GM12878 (cell line): ENCODE measurements at regions of chr15 and their contacts with region 1.

Region 1: DNA sequence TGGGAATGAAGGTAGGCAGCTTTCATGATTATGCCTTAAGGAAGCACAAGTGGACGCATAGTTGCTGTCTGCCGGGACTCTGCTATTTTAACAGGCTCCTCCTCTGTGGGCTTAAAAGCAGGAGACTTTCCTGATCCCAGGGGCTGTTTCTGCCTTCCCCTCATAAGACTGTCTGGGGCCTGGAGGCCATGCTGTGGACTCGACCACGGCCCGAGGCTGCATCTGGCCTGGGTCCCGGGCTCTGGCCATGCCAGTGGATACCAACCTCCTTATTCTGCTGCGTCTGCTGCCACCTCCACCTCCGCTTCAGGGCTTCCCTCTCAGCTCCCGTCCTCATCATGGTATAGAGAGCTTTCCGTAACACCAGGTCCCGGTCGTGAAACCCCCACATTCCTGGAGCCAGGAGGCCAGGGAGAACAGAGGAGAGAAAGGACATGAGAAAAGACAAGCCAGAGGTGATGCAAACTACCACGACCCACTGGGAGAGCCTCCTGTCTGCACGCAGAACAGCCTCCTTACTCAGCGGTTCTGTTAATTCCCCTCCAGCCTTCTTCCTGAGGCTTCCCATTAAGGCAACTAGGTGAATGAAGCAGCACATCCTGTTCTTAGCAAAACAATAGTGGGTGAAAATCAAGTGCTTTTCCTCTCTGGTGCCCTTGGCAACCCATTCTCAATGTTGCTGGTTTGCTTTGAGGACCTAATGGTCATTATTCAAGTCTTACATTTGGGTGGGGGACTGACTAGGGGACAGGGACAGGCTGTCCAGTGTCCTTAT is 200.5 kb downstream of the KLF13 start:
- DNase-seq: no peak
- ATAC-seq: no peak
- H3K4me3 ChIP-seq: no peak overlapping the region
- H3K27ac ChIP-seq: no peak overlapping the region
- H3K4me1 ChIP-seq: no peaks in the 10 kb centered on the region
- H3K27me3 ChIP-seq: no peaks in the 10 kb centered on the region; a peak in 1 of 4 replicates
- CTCF ChIP-seq: no peak
- EP300 ChIP-seq: no peak
- POLR2A ChIP-seq: no peak
- RAD21 ChIP-seq: no peak

Region 2: GRCh38 chr15:31563421-31563820 is 36.3 kb after region 1 on chr15:
- CTCF ChIA-PET with region 1: no interaction called
- POLR2A ChIA-PET with region 1: no interaction called
- RAD21 ChIA-PET with region 1: no interaction called
- SMC1A ChIA-PET with region 1: no interaction called
- in situ Hi-C with region 1: no loop called
- intact Hi-C with region 1: loop called (anchors 5 kb)
- DNase-seq: no peak
- ATAC-seq: no peak
- H3K4me3 ChIP-seq: no peak overlapping the region
- H3K27ac ChIP-seq: no peak overlapping the region
- H3K4me1 ChIP-seq: no peaks in the 10 kb centered on the region
- H3K27me3 ChIP-seq: no peaks in the 10 kb centered on the region
- CTCF ChIP-seq: no peak
- EP300 ChIP-seq: no peak
- POLR2A ChIP-seq: no peak
- RAD21 ChIP-seq: no peak

Region 3: DNA sequence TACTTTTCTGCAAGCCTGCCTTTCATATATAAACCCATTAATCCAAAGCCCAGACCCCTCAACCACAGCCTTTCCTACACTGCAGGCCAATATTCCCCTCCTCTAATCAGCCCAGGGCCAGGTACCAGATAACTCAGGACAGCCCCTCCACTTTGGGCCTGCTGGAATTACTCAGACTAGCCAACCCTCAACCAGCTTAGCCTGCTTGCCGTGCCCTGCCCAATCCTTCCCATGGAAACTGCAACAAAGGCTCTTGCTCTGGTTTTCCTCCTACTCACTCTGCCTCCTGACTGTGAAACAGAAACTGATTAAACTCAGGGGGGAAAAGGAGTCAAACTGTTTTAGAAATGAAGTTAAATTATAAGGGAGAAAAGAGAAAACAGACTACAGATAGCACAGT is 47.7 kb after region 1 on chr15:
- CTCF ChIA-PET with region 1: no interaction called
- POLR2A ChIA-PET with region 1: no interaction called
- RAD21 ChIA-PET with region 1: no interaction called
- SMC1A ChIA-PET with region 1: no interaction called
- in situ Hi-C with region 1: no loop called
- intact Hi-C with region 1: loop called (anchors 5 kb)
- DNase-seq: no peak
- ATAC-seq: no peak
- H3K4me3 ChIP-seq: no peak overlapping the region
- H3K27ac ChIP-seq: no peak overlapping the region
- H3K4me1 ChIP-seq: no peaks in the 10 kb centered on the region
- H3K27me3 ChIP-seq: no peaks in the 10 kb centered on the region
- CTCF ChIP-seq: no peak
- EP300 ChIP-seq: no peak
- POLR2A ChIP-seq: no peak
- RAD21 ChIP-seq: no peak

Region 4: DNA sequence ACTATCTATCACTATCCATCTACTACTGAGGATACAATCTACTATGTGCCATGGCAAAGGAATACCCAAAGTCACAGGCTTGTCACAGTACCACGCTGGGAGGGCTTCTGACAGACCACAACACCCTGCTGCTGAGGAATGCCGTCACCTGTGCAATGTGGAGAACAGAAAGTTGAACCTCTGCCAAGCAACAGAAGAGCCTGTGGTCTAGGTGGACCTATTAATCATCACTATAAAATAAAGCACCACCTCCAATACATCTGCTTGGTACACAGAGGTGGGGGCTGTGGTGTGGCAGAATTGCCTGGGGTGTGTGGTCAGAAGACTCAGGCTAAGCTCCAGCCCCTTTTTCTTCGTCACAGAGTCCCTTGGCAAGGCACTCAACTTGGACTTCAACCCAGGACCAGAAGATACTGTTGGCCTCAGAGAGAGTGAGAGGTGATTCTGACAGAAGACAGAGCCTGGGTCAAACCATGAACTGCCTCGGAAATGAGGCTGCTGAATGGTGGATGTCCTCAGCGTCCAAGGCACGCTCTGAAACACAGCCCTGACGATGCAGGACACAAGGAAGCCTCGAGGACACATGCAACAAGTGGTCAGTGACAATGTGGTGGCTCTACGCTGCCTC is 313.9 kb after region 1 on chr15:
- CTCF ChIA-PET with region 1: no interaction called
- POLR2A ChIA-PET with region 1: no interaction called
- RAD21 ChIA-PET with region 1: no interaction called
- SMC1A ChIA-PET with region 1: no interaction called
- in situ Hi-C with region 1: no loop called
- intact Hi-C with region 1: no loop called
- DNase-seq: no peak
- ATAC-seq: peak; percentile 38; the same call in 2 of the 3 replicates
- H3K4me3 ChIP-seq: no peak overlapping the region
- H3K27ac ChIP-seq: no peak overlapping the region
- H3K4me1 ChIP-seq: no peaks in the 10 kb centered on the region
- H3K27me3 ChIP-seq: no peaks in the 10 kb centered on the region
- CTCF ChIP-seq: no peak
- EP300 ChIP-seq: no peak
- POLR2A ChIP-seq: no peak
- RAD21 ChIP-seq: no peak